Keratinocyte (primary cell): ENCODE measurements at regions of chr12 and their contacts with region 1.

Region 1: GRCh38 chr12:105374303-105374702 is 43.8 kb downstream of the C12orf75 start:
- DNase-seq: no peak
- H3K4me3 ChIP-seq: no peak overlapping the region
- H3K27ac ChIP-seq: no peak overlapping the region
- H3K4me1 ChIP-seq: no peaks in the 10 kb centered on the region
- H3K27me3 ChIP-seq: no peaks in the 10 kb centered on the region
- CTCF ChIP-seq: no peak

Region 2: GRCh38 chr12:105267711-105268110 is 106.6 kb before region 1 on chr12:
- dilution Hi-C with region 1: loop called (anchors 5 kb)
- DNase-seq: no peak
- H3K4me3 ChIP-seq: no peak overlapping the region
- H3K27ac ChIP-seq: no peak overlapping the region
- H3K4me1 ChIP-seq: peaks cover 8% of the 10 kb centered on the region
- H3K27me3 ChIP-seq: no peaks in the 10 kb centered on the region
- CTCF ChIP-seq: no peak

Region 3: DNA sequence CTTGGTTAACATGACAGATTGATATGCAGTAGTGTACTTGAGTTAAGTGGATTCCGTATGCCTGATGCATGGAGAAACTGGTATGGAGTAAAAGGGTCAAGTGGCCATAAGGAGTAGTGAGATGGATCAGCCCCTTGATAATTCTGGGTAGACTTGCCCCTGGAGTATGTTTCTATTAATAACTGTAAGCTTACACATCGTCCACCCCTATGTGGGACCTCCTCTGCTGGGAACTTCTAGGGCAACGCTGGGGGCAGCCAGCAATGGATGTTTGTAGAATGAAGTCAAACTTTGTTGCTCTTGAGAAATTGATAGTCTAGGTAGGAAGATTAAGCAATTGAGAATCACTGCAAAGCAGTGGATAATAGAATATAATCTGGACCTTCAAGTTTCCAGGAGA is 40.3 kb before region 1 on chr12:
- dilution Hi-C with region 1: no loop called
- DNase-seq: no peak
- H3K4me3 ChIP-seq: no peak overlapping the region
- H3K27ac ChIP-seq: no peak overlapping the region
- H3K4me1 ChIP-seq: peaks cover 35% of the 10 kb centered on the region
- H3K27me3 ChIP-seq: no peaks in the 10 kb centered on the region
- CTCF ChIP-seq: no peak